Natural killer cell (primary cell): ENCODE measurements at regions of chr2 and their contacts with region 1.

Region 1: GRCh38 chr2:151261231-151261976 is at the start of gene RBM43:
- DNase-seq: peak; percentile 74 to 93
- ATAC-seq: peak; percentile 86 to 88 (median 86)
- H3K4me3 ChIP-seq: peak within 1 kb of the TSS; percentile 87
- H3K4me3 Mint-ChIP-seq: peak within 1 kb of the TSS; percentile 95
- H3K27ac ChIP-seq: peak within 1 kb of the TSS; percentile 99
- H3K27ac Mint-ChIP-seq: peak within 1 kb of the TSS; percentile 95 to 96
- H3K4me1 ChIP-seq: peaks cover 10% of the 10 kb centered on the region
- H3K4me1 Mint-ChIP-seq: peaks cover 16 to 22% of the 10 kb centered on the region in 2 donors
- H3K27me3 ChIP-seq: no peaks in the 10 kb centered on the region
- H3K27me3 Mint-ChIP-seq: no peaks in the 10 kb centered on the region
- CTCF ChIP-seq: no peak
- total RNA-seq, gene RBM43: 5.6 to 12.4 (median 10.9) TPM

Region 2: DNA sequence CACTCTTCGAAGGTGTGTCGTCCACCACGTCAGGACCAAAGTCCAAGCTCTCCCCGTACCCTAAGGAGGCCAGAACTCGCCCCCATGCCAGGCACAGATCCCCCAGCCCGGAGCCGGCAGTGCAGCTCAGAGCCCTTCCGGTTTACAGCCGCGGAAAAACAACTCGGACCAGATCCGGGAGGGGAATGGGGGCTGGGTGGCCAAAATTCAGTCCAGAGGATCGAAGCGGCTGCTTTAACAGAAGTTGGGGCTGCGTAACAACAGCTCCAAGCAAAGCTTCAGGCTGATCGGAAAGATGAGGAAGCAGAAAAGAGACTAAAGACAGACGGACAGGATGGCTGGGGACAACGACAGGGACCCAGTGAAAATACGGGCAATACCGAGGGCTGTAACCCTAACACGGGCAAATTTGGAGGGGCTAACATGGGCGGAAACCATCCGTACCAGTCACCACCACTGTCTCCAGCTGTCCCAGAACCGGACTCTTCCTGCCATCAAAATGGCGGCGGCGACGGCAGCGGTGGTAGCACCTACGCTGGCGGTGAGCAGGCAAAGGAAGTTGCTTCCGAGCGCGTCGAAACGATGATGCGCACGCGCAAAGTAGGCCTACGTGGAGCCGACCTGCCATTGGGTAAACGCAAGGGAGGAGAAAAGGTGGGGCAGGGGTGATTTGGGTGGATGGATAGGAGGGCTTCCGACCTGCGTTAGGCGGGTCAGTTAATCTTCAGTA is 1674.0 kb before region 1 on chr2 and contains the start of gene MMADHC:
- intact Hi-C with region 1: loop called (anchors 10 kb)
- DNase-seq: peak; percentile 90 to 97
- ATAC-seq: peak; percentile 92 to 97 (median 95)
- H3K4me3 ChIP-seq: peak within 1 kb of the TSS; percentile 67
- H3K4me3 Mint-ChIP-seq: peak within 1 kb of the TSS; percentile 97
- H3K27ac ChIP-seq: peak within 1 kb of the TSS; percentile 88
- H3K27ac Mint-ChIP-seq: peak within 1 kb of the TSS; percentile 97 to 99
- H3K4me1 ChIP-seq: peaks cover 10% of the 10 kb centered on the region
- H3K4me1 Mint-ChIP-seq: peaks cover 46 to 57% of the 10 kb centered on the region in 2 donors
- H3K27me3 ChIP-seq: no peaks in the 10 kb centered on the region
- H3K27me3 Mint-ChIP-seq: peaks cover 14 to 24% of the 10 kb centered on the region in 2 donors
- CTCF ChIP-seq: no peak
- total RNA-seq, gene MMADHC: 59.6 to 73.9 (median 65.7) TPM

Region 3: DNA sequence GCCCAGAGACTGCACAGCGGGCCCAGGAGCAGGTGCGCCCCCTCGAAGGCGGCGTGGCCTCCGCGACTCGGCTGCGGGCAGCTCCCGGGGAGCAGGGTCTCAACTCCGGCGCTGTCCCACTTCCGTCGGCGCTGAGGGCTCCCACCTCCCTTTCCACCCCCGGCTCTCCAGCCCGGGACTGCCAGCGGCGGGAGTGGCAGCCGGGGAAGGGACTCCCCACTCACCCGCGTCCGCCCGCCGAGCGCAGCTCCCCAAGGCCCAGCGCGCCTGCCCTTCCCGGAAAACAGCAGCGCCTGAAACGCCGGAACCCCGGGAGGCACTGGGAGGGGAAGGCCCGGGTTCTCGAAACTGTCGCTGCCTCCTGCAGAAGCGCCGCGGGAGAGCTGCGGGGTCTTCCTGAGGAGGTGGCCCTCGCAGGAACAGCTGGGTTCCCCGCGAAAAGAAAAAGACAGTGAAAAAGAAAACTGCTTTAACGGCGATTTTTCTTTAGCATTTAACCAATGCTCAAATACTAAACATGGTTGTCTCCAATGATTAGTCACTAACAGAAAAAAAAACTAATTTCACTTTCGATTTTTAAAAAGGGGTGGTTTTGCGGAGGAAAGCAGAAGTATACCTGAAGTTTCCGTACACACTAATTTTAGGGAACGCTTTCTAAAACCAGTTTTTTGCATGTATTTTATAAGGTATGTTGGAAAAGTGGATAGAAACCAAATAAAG is 28.1 kb after region 1 on chr2 and contains the start of gene NMI:
- intact Hi-C with region 1: loop called (anchors 1 kb)
- DNase-seq: peak; percentile 70 to 77
- ATAC-seq: peak; percentile 71 to 81 (median 74)
- H3K4me3 ChIP-seq: peak within 1 kb of the TSS; percentile 79
- H3K4me3 Mint-ChIP-seq: peak within 1 kb of the TSS; percentile 94
- H3K27ac ChIP-seq: peak within 1 kb of the TSS; percentile 93
- H3K27ac Mint-ChIP-seq: peak within 1 kb of the TSS; percentile 82 to 96
- H3K4me1 ChIP-seq: peaks cover 19% of the 10 kb centered on the region
- H3K4me1 Mint-ChIP-seq: peaks cover 24 to 35% of the 10 kb centered on the region in 2 donors
- H3K27me3 ChIP-seq: no peaks in the 10 kb centered on the region
- H3K27me3 Mint-ChIP-seq: no peaks in the 10 kb centered on the region
- CTCF ChIP-seq: no peak
- total RNA-seq, gene NMI: 19.5 to 32.8 (median 23.0) TPM

Region 4: GRCh38 chr2:151299920-151300539 is 38.6 kb after region 1 on chr2:
- intact Hi-C with region 1: no loop called
- DNase-seq: no peak
- ATAC-seq: no peak
- H3K4me3 ChIP-seq: no peak overlapping the region
- H3K4me3 Mint-ChIP-seq: no peak overlapping the region
- H3K27ac ChIP-seq: no peak overlapping the region
- H3K27ac Mint-ChIP-seq: no peak overlapping the region
- H3K4me1 ChIP-seq: no peaks in the 10 kb centered on the region
- H3K4me1 Mint-ChIP-seq: no peaks in the 10 kb centered on the region
- H3K27me3 ChIP-seq: no peaks in the 10 kb centered on the region
- H3K27me3 Mint-ChIP-seq: peaks cover 9 to 19% of the 10 kb centered on the region in 2 donors
- CTCF ChIP-seq: no peak